ENCODE measurements at regions of chr13 and their contacts with region 1.

Region 1: DNA sequence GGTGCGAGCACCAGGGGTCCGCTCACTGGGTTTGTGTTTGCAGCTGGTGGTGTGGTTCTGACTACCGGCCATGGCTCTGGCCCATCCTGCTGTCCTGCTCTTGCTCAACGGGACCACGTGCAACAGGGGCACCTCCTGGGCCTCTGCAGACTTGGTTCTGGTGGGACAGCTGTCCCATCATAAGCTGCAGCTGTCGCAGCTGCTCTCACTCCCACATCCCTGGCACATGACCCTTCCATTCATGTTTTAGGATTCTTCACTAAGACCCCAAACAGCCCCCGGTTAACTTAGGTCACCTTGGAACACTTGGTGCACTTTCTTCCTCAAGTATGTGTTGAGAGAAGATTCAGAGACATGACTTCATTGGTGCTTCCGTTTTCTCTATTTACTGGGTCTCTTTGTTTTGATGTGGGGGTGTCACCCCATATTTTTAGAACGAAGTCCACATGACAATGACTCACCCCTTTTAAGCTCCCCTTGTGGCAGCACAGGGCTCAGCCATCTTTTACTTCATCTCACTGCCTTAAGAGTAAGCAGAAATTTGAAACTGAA is 68.4 kb upstream of the ARHGEF7 start:
- H3K4me3 Mint-ChIP-seq: no peak overlapping the region
- H3K27ac Mint-ChIP-seq: no peak overlapping the region
- H3K4me1 Mint-ChIP-seq: peaks cover 13% of the 10 kb centered on the region
- H3K27me3 Mint-ChIP-seq: peaks cover 4% of the 10 kb centered on the region

Region 2: DNA sequence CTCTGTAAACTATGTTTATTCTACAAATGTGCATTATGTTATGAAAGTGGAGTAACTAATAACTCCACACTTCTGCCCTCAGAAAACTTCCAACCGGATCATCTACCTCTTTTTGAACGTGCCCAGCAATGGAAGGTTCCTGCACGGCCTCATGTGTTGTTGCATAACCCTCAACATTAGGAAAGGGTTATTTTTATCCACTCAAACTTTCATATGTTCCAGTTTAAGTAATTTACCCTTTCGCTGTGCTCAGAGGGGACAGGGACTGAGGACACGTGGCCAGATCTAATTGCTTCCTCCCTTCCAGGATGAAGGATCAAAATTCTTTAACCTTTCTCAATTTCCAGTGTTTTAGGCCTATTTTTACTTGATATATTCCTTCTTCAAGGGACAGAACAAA is 1289.9 kb before region 1 on chr13:
- intact Hi-C with region 1: no loop called
- H3K4me3 Mint-ChIP-seq: no peak overlapping the region
- H3K27ac Mint-ChIP-seq: no peak overlapping the region
- H3K4me1 Mint-ChIP-seq: peaks cover 10% of the 10 kb centered on the region
- H3K27me3 Mint-ChIP-seq: no peaks in the 10 kb centered on the region

Region 3: GRCh38 chr13:110593430-110594130 is 453.1 kb before region 1 on chr13:
- intact Hi-C with region 1: loop called (anchors 10 kb)
- H3K4me3 Mint-ChIP-seq: no peak overlapping the region
- H3K27ac Mint-ChIP-seq: no peak overlapping the region
- H3K4me1 Mint-ChIP-seq: peaks cover 6% of the 10 kb centered on the region
- H3K27me3 Mint-ChIP-seq: peaks cover 1% of the 10 kb centered on the region